ENCODE measurements at regions of chrX and their contacts with region 1.

Region 1: GRCh38 chrX:12946838-12947544 is 27.9 kb upstream of the TMSB4X start:
- DNase-seq: peak; percentile 65
- H3K4me3 Mint-ChIP-seq: peak overlapping the region; percentile 49
- H3K27ac Mint-ChIP-seq: peak overlapping the region; percentile 95
- H3K4me1 Mint-ChIP-seq: peaks cover 60% of the 10 kb centered on the region
- H3K27me3 Mint-ChIP-seq: no peaks in the 10 kb centered on the region

Region 2: GRCh38 chrX:11758400-11759171 is 1188.4 kb before region 1 on chrX:
- intact Hi-C with region 1: loop called (anchors 10 kb)
- DNase-seq: peak; percentile 84
- H3K4me3 Mint-ChIP-seq: peak overlapping the region; percentile 98
- H3K27ac Mint-ChIP-seq: peak overlapping the region; percentile 98
- H3K4me1 Mint-ChIP-seq: peaks cover 18% of the 10 kb centered on the region
- H3K27me3 Mint-ChIP-seq: peaks cover 25% of the 10 kb centered on the region

Region 3: DNA sequence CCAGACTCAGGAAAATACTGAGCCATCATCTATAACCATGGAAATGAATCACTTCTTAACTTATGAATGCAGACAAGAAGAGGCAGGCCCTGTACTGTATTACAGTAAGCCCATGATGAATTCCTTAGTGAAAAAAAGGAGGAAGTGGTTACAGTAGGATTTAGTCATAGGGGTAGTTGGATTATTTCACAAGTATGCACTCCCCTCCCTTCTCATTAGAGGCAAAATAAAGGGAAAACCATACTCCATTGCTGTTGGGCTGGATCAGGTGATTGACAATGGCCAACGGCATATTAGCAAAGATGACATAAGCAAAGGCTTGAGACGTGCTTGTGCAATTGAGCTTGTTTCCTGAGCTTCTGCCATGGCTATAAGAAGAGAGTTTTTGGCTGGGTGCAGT is 336.9 kb before region 1 on chrX:
- intact Hi-C with region 1: no loop called
- DNase-seq: no peak
- H3K4me3 Mint-ChIP-seq: no peak overlapping the region
- H3K27ac Mint-ChIP-seq: no peak overlapping the region
- H3K4me1 Mint-ChIP-seq: no peaks in the 10 kb centered on the region
- H3K27me3 Mint-ChIP-seq: no peaks in the 10 kb centered on the region

Region 4: DNA sequence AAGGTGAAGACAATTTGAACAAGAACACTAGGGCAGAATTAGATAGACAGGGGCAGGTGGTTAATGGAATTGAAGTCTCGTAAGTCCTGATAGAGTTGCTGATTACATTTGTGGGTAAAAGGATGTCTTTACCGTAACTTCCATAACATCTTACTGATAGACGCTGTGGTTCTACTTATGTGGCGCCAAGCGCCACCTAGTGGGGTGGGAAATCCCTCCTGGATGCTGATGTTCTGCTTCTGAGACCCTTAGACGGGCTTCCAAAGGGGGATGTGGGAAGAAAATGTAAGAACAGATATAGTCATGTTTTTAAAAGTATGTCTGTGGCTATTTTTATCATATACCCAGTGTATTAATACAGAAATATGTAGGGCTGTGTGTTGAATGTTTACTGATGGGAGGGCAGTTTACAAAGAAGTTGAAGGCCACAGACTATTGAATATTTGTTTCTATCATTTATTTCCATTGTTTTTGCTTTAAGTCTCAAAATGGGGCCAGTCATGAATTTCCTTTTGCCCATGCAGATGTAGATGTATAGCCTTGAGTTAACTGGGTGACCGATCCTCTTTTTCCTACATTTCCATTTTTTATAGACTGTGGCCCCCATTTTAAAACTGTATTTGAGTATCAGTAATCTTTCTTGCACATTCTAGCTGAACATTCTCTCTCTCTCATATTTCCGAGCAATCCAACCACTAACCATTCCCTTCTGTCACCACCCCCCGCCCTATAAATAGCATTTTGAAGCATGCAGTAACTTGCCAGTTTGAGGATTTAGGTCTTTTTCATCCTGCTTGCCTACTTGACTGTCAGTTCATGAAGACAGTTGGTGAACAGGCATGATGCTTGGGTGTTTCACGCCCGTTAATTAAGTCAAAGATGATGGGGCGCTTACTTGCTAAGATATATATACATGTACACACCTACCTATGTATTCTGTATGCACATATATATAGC is 52.6 kb before region 1 on chrX:
- intact Hi-C with region 1: loop called (anchors 2 kb)
- DNase-seq: peak; percentile 31
- H3K4me3 Mint-ChIP-seq: no peak overlapping the region
- H3K27ac Mint-ChIP-seq: no peak overlapping the region
- H3K4me1 Mint-ChIP-seq: peaks cover 53% of the 10 kb centered on the region
- H3K27me3 Mint-ChIP-seq: peaks cover 4% of the 10 kb centered on the region

Region 5: GRCh38 chrX:12999422-12999821 is 52.4 kb after region 1 on chrX:
- intact Hi-C with region 1: loop called (anchors 1 kb)
- DNase-seq: peak; percentile 51
- H3K4me3 Mint-ChIP-seq: peak overlapping the region; percentile 63
- H3K27ac Mint-ChIP-seq: peak overlapping the region; percentile 98
- H3K4me1 Mint-ChIP-seq: peaks cover 59% of the 10 kb centered on the region
- H3K27me3 Mint-ChIP-seq: no peaks in the 10 kb centered on the region

Region 6: DNA sequence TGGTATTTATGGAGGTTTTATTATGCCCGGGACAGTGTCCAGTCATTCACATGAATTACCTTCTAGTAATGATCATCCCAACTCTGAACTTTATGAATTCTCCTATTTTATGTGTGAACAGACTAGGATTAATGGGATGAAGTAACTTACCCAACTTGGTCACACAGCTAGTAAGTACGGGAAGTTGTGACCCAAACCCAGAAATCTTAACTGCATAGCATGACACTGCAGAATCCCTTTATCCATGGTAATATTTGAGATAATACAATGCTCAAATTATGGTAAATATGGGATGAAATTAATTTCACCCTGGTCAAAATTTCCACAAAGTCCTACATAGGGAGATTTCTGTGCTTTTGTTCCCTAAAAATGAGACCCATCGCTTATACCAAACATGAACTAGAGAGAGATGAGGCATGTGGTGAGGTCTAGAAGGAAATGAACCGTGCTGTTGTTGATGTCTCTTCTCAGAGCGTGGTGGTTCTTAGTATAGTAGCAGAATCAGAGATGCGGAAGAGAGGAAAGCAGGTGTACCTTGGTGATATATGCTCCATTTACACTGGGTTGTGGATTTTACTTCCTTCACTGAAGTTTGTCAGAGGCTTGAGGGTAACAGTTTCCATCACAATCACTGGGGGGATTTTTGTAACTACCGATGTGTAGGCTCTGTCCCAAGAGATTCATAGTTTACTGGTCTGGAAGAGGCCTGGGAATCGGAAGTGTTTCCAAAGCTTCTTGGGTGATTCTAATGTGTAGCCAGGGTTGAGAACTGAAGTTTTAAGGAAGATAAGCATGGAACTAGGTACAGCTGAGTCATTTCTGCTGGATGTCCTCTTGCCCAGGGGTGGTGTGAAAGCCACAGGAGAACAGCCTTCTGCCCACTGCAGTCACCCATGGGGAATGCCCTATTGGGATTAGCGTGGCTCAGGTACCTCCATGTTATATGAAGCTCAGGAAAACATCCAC is 127.6 kb after region 1 on chrX:
- intact Hi-C with region 1: loop called (anchors 1 kb)
- DNase-seq: no peak
- H3K4me3 Mint-ChIP-seq: peak overlapping the region; percentile 54
- H3K27ac Mint-ChIP-seq: peak overlapping the region; percentile 92
- H3K4me1 Mint-ChIP-seq: peaks cover 47% of the 10 kb centered on the region
- H3K27me3 Mint-ChIP-seq: no peaks in the 10 kb centered on the region

Region 7: GRCh38 chrX:13153796-13154195 is 206.8 kb after region 1 on chrX:
- intact Hi-C with region 1: no loop called
- DNase-seq: no peak
- H3K4me3 Mint-ChIP-seq: no peak overlapping the region
- H3K27ac Mint-ChIP-seq: no peak overlapping the region
- H3K4me1 Mint-ChIP-seq: peaks cover 5% of the 10 kb centered on the region
- H3K27me3 Mint-ChIP-seq: no peaks in the 10 kb centered on the region

Region 8: GRCh38 chrX:13254076-13254785 is 307.2 kb after region 1 on chrX:
- intact Hi-C with region 1: loop called (anchors 5 kb)
- DNase-seq: no peak
- H3K4me3 Mint-ChIP-seq: peak overlapping the region; percentile 3
- H3K27ac Mint-ChIP-seq: peak overlapping the region; percentile 14
- H3K4me1 Mint-ChIP-seq: peaks cover 59% of the 10 kb centered on the region
- H3K27me3 Mint-ChIP-seq: no peaks in the 10 kb centered on the region

Region 9: GRCh38 chrX:13487731-13488523 is 540.9 kb after region 1 on chrX:
- intact Hi-C with region 1: loop called (anchors 1 kb)
- DNase-seq: peak; percentile 27
- H3K4me3 Mint-ChIP-seq: peak overlapping the region; percentile 7
- H3K27ac Mint-ChIP-seq: peak overlapping the region; percentile 61
- H3K4me1 Mint-ChIP-seq: peaks cover 26% of the 10 kb centered on the region
- H3K27me3 Mint-ChIP-seq: no peaks in the 10 kb centered on the region